ENCODE measurements at regions of chr11 and their contacts with region 1.

Region 1: DNA sequence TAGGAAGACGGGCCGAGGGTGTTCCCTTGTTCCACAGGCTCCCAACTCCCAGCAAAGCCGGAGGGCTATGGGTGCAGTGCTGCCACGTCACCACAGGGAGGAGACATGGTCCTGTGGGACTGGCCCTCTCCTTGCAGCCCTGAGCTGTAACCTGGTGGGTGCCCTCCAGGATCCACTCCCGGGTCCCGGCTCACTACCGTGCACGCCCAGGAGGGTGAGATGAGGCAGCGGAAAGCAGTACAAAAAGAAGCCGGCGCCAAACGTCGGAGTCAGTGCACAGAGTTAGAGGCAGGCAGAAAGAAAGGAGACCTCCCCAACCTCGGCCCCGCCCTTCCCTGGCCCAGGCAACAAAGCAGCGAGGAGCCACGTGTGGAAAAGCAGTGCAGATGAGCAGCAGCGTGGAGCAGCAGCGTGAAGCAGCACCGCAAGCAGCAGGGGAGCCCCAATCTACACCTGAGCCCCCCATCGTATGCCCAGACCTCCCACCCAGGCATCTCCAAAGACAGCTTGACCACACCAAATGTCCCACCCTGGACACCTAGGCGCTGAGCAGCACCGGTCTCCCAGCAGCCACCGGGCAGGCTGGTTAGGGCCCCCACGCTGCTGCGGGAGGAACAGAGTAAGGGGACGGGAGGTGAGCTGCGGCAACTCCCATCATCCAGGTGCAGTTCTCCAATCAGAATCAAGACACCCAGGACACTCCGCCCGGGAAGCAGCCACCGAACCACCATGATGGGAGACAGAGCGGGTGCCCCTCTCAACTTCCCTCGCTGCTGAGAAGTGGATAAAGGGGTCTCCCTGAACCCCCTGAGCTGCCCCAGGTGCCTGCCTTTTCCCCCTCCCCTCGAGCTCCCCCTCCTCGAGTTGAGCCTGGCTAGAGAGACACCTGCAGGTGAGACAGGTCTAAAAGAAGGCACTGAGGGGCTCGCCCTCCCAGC is 28.8 kb downstream of the IGSF9B start:
- DNase-seq: peak; percentile 43 to 72 (median 70)
- ATAC-seq: peak; percentile 85
- H3K4me3 ChIP-seq: peak overlapping the region; percentile 47
- H3K4me3 Mint-ChIP-seq: peak overlapping the region; percentile 84 to 93 (median 88)
- H3K27ac ChIP-seq: peak overlapping the region; percentile 4
- H3K27ac Mint-ChIP-seq: peak overlapping the region; percentile 33 to 95 (median 81)
- H3K4me1 ChIP-seq: peaks cover 18% of the 10 kb centered on the region in 2 donors
- H3K4me1 Mint-ChIP-seq: peaks cover 16 to 37% (median 23%) of the 10 kb centered on the region in 7 donors
- H3K27me3 ChIP-seq: no peaks in the 10 kb centered on the region
- H3K27me3 Mint-ChIP-seq: no peaks in the 10 kb centered on the region

Region 2: GRCh38 chr11:133916784-133917440 is 11.0 kb before region 1 on chr11:
- CTCF ChIA-PET with region 1: interaction called, 10 read pairs
- POLR2A ChIA-PET with region 1: no interaction called
- intact Hi-C with region 1: no loop called
- DNase-seq: no peak
- ATAC-seq: no peak
- H3K4me3 ChIP-seq: no peak overlapping the region
- H3K4me3 Mint-ChIP-seq: no peak overlapping the region
- H3K27ac ChIP-seq: no peak overlapping the region
- H3K27ac Mint-ChIP-seq: no peak overlapping the region
- H3K4me1 ChIP-seq: no peaks in the 10 kb centered on the region
- H3K4me1 Mint-ChIP-seq: peaks cover 0 to 11% (median 4%) of the 10 kb centered on the region in 7 donors
- H3K27me3 ChIP-seq: no peaks in the 10 kb centered on the region
- H3K27me3 Mint-ChIP-seq: peaks cover 0 to 4% (median 0%) of the 10 kb centered on the region in 5 donors

Region 3: DNA sequence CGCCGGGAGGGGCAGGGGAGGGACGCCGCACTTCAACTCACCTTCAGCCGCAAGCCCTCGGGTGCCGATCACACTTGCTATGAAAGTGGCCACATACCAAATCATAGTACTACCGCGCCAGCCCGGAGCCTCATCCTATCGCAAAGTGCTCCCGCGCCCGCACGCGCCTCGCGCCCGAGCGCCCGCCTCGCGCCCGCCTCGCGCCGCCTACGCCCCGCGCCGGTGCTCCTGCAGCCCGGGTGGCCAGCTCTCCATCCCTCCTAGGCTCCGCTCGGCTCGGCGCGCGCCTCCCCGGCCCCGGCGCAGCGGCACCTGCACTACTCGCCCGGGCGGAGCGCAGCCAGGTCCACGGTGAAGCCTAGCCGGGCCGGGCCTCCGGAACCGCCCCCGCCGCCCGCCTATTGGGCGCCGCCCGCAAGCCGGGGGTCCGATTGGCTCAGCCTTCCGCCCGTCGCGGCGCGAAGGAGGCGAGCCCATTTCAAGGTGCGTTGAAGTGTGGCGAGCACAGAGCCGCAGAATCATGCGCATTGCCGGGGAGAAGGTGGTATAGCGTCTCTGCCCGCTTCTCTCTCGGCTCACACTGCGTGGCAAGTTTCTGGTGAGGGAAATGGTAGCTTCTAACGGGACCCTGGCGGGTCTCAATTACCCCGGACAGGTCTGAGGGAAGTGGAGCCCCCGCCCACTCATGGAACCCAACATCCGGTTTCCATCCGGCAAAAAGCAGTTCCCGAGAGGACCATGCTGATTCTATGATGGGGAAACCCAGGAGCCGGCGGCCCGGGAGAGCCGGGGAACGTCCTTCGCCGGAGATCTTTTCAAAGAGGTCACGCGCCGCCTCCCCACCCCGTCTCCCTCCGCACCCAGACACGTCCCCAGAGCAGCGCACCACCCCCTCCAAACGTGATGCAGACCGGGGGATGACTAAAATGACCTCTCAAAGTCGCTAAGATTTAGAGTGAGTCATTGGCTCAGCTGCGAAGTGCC is 29.0 kb after region 1 on chr11 and contains the start of gene IGSF9B:
- CTCF ChIA-PET with region 1: interaction called, 3 read pairs
- POLR2A ChIA-PET with region 1: interaction called, 3 read pairs
- intact Hi-C with region 1: loop called (anchors 1 kb)
- DNase-seq: peak; percentile 87 to 97 (median 92)
- ATAC-seq: peak; percentile 97
- H3K4me3 ChIP-seq: peak within 1 kb of the TSS; percentile 99
- H3K4me3 Mint-ChIP-seq: peak within 1 kb of the TSS; percentile 89 to 96 (median 92)
- H3K27ac ChIP-seq: peak within 1 kb of the TSS; percentile 75
- H3K27ac Mint-ChIP-seq: peak within 1 kb of the TSS; percentile 48 to 91 (median 88)
- H3K4me1 ChIP-seq: peaks cover 11 to 27% of the 10 kb centered on the region in 2 donors
- H3K4me1 Mint-ChIP-seq: peaks cover 29 to 52% (median 43%) of the 10 kb centered on the region in 7 donors
- H3K27me3 ChIP-seq: no peaks in the 10 kb centered on the region
- H3K27me3 Mint-ChIP-seq: peaks cover 7 to 24% (median 16%) of the 10 kb centered on the region in 5 donors
- total RNA-seq, gene IGSF9B: 17.6 to 155 (median 24.1) TPM

Region 4: GRCh38 chr11:134026655-134027343 is 98.8 kb after region 1 on chr11:
- CTCF ChIA-PET with region 1: interaction called, 16 read pairs
- POLR2A ChIA-PET with region 1: no interaction called
- intact Hi-C with region 1: no loop called
- DNase-seq: no peak
- ATAC-seq: no peak
- H3K4me3 ChIP-seq: no peak overlapping the region
- H3K4me3 Mint-ChIP-seq: peak overlapping the region in 6 of 10 donors; percentile 1 to 75 (median 66)
- H3K27ac ChIP-seq: no peak overlapping the region
- H3K27ac Mint-ChIP-seq: peak overlapping the region in 8 of 9 donors; percentile 73 to 95 (median 86)
- H3K4me1 ChIP-seq: peaks cover 20 to 27% of the 10 kb centered on the region in 2 donors
- H3K4me1 Mint-ChIP-seq: peaks cover 16 to 50% (median 39%) of the 10 kb centered on the region in 7 donors
- H3K27me3 ChIP-seq: no peaks in the 10 kb centered on the region
- H3K27me3 Mint-ChIP-seq: peaks cover 0 to 28% (median 0%) of the 10 kb centered on the region in 5 donors

Region 5: DNA sequence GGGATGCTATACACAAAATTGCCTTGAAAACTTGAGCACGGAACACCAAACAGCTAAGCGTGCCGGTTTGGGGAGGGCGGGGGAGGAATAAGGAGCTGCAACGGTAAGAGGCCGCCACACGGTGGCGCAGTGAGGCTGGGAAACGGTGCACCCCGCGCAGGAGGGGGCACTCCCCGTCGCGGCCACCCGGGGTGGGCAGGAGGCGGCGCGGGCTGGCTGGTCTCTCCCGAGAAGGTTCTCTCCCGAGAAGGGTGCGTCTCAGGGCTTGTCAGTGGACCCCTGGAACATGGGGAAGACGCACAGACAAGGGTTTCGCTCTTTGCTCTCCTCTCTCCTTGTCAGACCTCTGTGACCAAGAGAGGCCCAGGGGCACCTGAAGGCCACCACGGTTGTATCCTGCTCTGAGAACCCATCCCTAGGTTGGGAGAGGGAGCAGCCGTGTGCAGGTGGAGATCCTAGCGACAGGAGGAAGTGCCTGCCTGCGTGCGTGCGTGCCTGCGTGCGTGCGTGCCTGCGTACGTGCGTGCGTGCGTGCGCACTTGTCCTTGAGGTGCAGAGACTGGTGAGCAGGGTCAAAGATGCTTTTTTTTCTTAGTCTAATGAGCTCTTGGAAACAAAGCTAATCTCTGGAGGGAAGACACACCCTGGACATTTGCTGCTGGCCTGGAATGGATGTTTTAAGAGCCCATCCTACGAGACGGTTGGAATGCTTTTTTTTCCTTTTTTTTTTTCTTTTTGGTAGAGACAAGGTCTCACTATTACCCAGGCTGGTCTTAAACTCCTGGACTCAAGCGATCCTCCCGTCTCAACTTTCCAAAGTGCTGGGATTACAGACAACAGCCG is 122.8 kb after region 1 on chr11:
- CTCF ChIA-PET with region 1: interaction called, 29 read pairs
- POLR2A ChIA-PET with region 1: no interaction called
- intact Hi-C with region 1: loop called (anchors 1 kb)
- DNase-seq: peak; percentile 60 to 82 (median 71)
- ATAC-seq: peak; percentile 96
- H3K4me3 ChIP-seq: no peak overlapping the region
- H3K4me3 Mint-ChIP-seq: peak overlapping the region in 5 of 10 donors; percentile 13 to 51 (median 48)
- H3K27ac ChIP-seq: no peak overlapping the region
- H3K27ac Mint-ChIP-seq: peak overlapping the region in 3 of 9 donors; percentile 44 to 86 (median 70)
- H3K4me1 ChIP-seq: peaks cover 4% of the 10 kb centered on the region in 2 donors
- H3K4me1 Mint-ChIP-seq: peaks cover 0 to 14% (median 5%) of the 10 kb centered on the region in 7 donors
- H3K27me3 ChIP-seq: peaks cover 0 to 3% of the 10 kb centered on the region in 2 donors
- H3K27me3 Mint-ChIP-seq: peaks cover 14 to 26% (median 21%) of the 10 kb centered on the region in 5 donors

Region 6: GRCh38 chr11:134139873-134140331 is 211.9 kb after region 1 on chr11:
- CTCF ChIA-PET with region 1: interaction called, 12 read pairs
- POLR2A ChIA-PET with region 1: no interaction called
- intact Hi-C with region 1: loop called in 1 of 2 experiments (anchors 1 kb)
- DNase-seq: peak in 7 of 9 donors; percentile 15 to 55 (median 43)
- ATAC-seq: peak; percentile 72
- H3K4me3 ChIP-seq: no peak overlapping the region
- H3K4me3 Mint-ChIP-seq: no peak overlapping the region
- H3K27ac ChIP-seq: no peak overlapping the region
- H3K27ac Mint-ChIP-seq: no peak overlapping the region
- H3K4me1 ChIP-seq: no peaks in the 10 kb centered on the region
- H3K4me1 Mint-ChIP-seq: peaks cover 0 to 13% (median 3%) of the 10 kb centered on the region in 7 donors
- H3K27me3 ChIP-seq: no peaks in the 10 kb centered on the region
- H3K27me3 Mint-ChIP-seq: peaks cover 0 to under 1% (median 0%) of the 10 kb centered on the region in 5 donors